Activated CD4-positive, alpha-beta T cell treated with anti-CD3 and anti-CD28 coated beads for 36 hours (primary cell): ENCODE measurements at regions of chr10 and their contacts with region 1.

Region 1: GRCh38 chr10:25016376-25017154 is at the start of gene THNSL1:
- DNase-seq: peak; percentile 98
- ATAC-seq: peak; percentile 99
- H3K4me3 Mint-ChIP-seq: peak within 1 kb of the TSS; percentile 85
- H3K27ac Mint-ChIP-seq: peak within 1 kb of the TSS; percentile 98
- H3K4me1 Mint-ChIP-seq: peaks cover 23% of the 10 kb centered on the region
- H3K27me3 Mint-ChIP-seq: no peaks in the 10 kb centered on the region
- total RNA-seq, gene THNSL1: 8.0 to 9.5 TPM

Region 2: DNA sequence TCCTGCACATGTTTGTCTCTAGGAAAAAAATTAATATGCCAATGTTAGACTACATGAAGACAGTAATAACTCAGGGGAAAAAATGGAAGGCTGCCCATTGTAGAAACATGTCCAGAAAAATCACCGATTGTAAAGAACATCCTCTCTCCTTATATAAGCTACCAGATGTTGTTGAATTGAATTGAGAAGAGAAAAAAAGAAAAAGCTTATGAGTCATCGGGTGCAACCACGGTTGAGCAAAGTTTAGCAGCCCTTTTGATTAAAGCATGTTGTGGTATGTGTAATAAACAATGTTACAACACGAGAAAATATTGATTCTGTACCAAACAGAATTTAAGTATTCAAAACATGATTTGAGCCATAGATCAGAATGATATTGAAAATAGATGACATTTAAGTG is 190.5 kb before region 1 on chr10:
- CTCF ChIA-PET with region 1: no interaction called
- POLR2A ChIA-PET with region 1: no interaction called
- intact Hi-C with region 1: loop called in 1 of 2 experiments (anchors 2 kb)
- DNase-seq: no peak
- ATAC-seq: no peak
- H3K4me3 Mint-ChIP-seq: peak overlapping the region; percentile 29
- H3K27ac Mint-ChIP-seq: no peak overlapping the region
- H3K4me1 Mint-ChIP-seq: peaks cover 41% of the 10 kb centered on the region
- H3K27me3 Mint-ChIP-seq: no peaks in the 10 kb centered on the region

Region 3: GRCh38 chr10:24952707-24953645 is 63.6 kb before region 1 on chr10:
- CTCF ChIA-PET with region 1: no interaction called
- POLR2A ChIA-PET with region 1: no interaction called
- intact Hi-C with region 1: loop called in 1 of 2 experiments (anchors 2 kb)
- DNase-seq: peak; percentile 59
- ATAC-seq: peak; percentile 69
- H3K4me3 Mint-ChIP-seq: peak overlapping the region; percentile 67
- H3K27ac Mint-ChIP-seq: no peak overlapping the region
- H3K4me1 Mint-ChIP-seq: peaks cover 17% of the 10 kb centered on the region
- H3K27me3 Mint-ChIP-seq: peaks cover 4% of the 10 kb centered on the region

Region 4: GRCh38 chr10:25061711-25062449 is 45.3 kb after region 1 on chr10:
- CTCF ChIA-PET with region 1: interaction called, 3 read pairs
- POLR2A ChIA-PET with region 1: interaction called, 3 read pairs
- intact Hi-C with region 1: loop called (anchors 1 kb)
- DNase-seq: peak; percentile 43
- ATAC-seq: no peak
- H3K4me3 Mint-ChIP-seq: peak overlapping the region; percentile 30
- H3K27ac Mint-ChIP-seq: peak overlapping the region; percentile 85
- H3K4me1 Mint-ChIP-seq: peaks cover 22% of the 10 kb centered on the region
- H3K27me3 Mint-ChIP-seq: peaks cover 2% of the 10 kb centered on the region

Region 5: GRCh38 chr10:25080880-25081581 is 64.5 kb after region 1 on chr10:
- CTCF ChIA-PET with region 1: interaction called, 5 read pairs
- POLR2A ChIA-PET with region 1: no interaction called
- intact Hi-C with region 1: loop called in 1 of 2 experiments (anchors 5 kb)
- DNase-seq: peak; percentile 77
- ATAC-seq: peak; percentile 65
- H3K4me3 Mint-ChIP-seq: no peak overlapping the region
- H3K27ac Mint-ChIP-seq: no peak overlapping the region
- H3K4me1 Mint-ChIP-seq: peaks cover 6% of the 10 kb centered on the region
- H3K27me3 Mint-ChIP-seq: peaks cover 3% of the 10 kb centered on the region